GM12878 (cell line): ENCODE measurements at regions of chr14 and their contacts with region 1.

Region 1: GRCh38 chr14:88013750-88014349 is 8.9 kb downstream of the GPR65 start:
- DNase-seq: no peak
- ATAC-seq: peak; percentile 79
- H3K4me3 ChIP-seq: no peak overlapping the region
- H3K27ac ChIP-seq: no peak overlapping the region
- H3K4me1 ChIP-seq: no peaks in the 10 kb centered on the region
- H3K27me3 ChIP-seq: no peaks in the 10 kb centered on the region
- CTCF ChIP-seq: peak; percentile 88 to 96 (median 91); a peak in 5 of 6 replicates
- EP300 ChIP-seq: no peak
- POLR2A ChIP-seq: no peak
- RAD21 ChIP-seq: peak; percentile 79

Region 2: GRCh38 chr14:87397499-87397898 is 616.4 kb before region 1 on chr14:
- CTCF ChIA-PET with region 1: no interaction called
- POLR2A ChIA-PET with region 1: no interaction called
- RAD21 ChIA-PET with region 1: no interaction called
- SMC1A ChIA-PET with region 1: no interaction called
- in situ Hi-C with region 1: no loop called
- intact Hi-C with region 1: no loop called
- DNase-seq: no peak
- ATAC-seq: peak; percentile 95
- H3K4me3 ChIP-seq: no peak overlapping the region
- H3K27ac ChIP-seq: no peak overlapping the region
- H3K4me1 ChIP-seq: no peaks in the 10 kb centered on the region
- H3K27me3 ChIP-seq: no peaks in the 10 kb centered on the region
- CTCF ChIP-seq: no peak; a peak in 1 of 6 replicates
- EP300 ChIP-seq: no peak
- POLR2A ChIP-seq: no peak
- RAD21 ChIP-seq: no peak

Region 3: GRCh38 chr14:87952307-87953094 is 61.3 kb before region 1 on chr14:
- CTCF ChIA-PET with region 1: interaction called, 67 read pairs
- POLR2A ChIA-PET with region 1: no interaction called
- RAD21 ChIA-PET with region 1: interaction called, 11 read pairs
- SMC1A ChIA-PET with region 1: interaction called, 43 read pairs
- in situ Hi-C with region 1: no loop called
- intact Hi-C with region 1: no loop called
- DNase-seq: no peak
- ATAC-seq: peak; percentile 88
- H3K4me3 ChIP-seq: no peak overlapping the region
- H3K27ac ChIP-seq: no peak overlapping the region; the same call in 1 of the 2 replicates
- H3K4me1 ChIP-seq: peaks cover 4% of the 10 kb centered on the region
- H3K27me3 ChIP-seq: no peaks in the 10 kb centered on the region
- CTCF ChIP-seq: no peak
- EP300 ChIP-seq: no peak
- POLR2A ChIP-seq: no peak
- RAD21 ChIP-seq: no peak

Region 4: GRCh38 chr14:87992718-87993628 is 20.9 kb before region 1 on chr14 and contains the start of gene GALC:
- CTCF ChIA-PET with region 1: interaction called, 17 read pairs
- POLR2A ChIA-PET with region 1: interaction called, 122 read pairs
- RAD21 ChIA-PET with region 1: interaction called, 13 read pairs
- SMC1A ChIA-PET with region 1: interaction called, 158 read pairs
- in situ Hi-C with region 1: no loop called
- intact Hi-C with region 1: no loop called
- DNase-seq: peak; percentile 62
- ATAC-seq: peak; percentile 82
- H3K4me3 ChIP-seq: peak within 1 kb of the TSS; percentile 75
- H3K27ac ChIP-seq: peak within 1 kb of the TSS; percentile 84
- H3K4me1 ChIP-seq: peaks cover 26% of the 10 kb centered on the region
- H3K27me3 ChIP-seq: no peaks in the 10 kb centered on the region
- CTCF ChIP-seq: 0 out of 6 replicates have a peak, but pooled peaks of 1 of the 3 experiments have one; percentile 4
- EP300 ChIP-seq: peak; percentile 73 to 81; a peak in 3 of 4 replicates
- POLR2A ChIP-seq: peak; percentile 88
- RAD21 ChIP-seq: peak; percentile 23; the same call in 1 of the 2 replicates
- polyA plus RNA-seq, gene GALC: 1.3 to 1.9 TPM

Region 5: DNA sequence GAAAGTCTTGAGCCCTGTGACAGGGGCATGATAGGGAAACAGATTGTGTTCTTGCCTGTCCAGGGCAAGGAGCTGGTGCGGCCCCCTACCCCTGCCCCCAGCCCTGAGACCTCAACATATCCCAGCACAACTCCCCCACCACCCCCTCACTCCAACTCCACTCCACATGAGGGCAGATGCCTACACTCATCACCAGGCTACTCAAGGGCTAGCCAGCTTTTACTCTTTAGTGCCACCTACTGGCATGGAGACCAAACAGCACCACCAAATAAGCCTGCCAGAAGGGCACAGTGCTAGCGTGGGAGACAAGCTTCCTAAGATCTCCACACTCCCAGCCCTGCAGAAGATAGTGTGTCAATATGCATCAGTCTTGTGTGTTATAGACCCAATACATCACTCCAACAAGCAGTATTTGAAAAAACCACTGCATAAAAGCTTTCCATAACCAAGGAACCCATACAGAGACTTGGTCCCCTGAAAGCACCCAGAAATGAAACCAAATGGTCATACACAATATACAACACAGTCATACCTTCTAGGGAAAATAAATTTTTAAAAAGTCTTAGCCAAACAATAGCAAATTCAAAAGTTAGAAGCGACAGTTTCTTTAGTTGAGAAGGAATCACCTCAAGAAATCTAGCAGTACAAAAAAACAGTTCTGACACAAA is 154.8 kb after region 1 on chr14:
- CTCF ChIA-PET with region 1: interaction called, 68 read pairs
- POLR2A ChIA-PET with region 1: no interaction called
- RAD21 ChIA-PET with region 1: interaction called, 12 read pairs
- SMC1A ChIA-PET with region 1: interaction called, 19 read pairs
- in situ Hi-C with region 1: no loop called
- intact Hi-C with region 1: loop called (anchors 1 kb)
- DNase-seq: no peak
- ATAC-seq: peak; percentile 98
- H3K4me3 ChIP-seq: no peak overlapping the region
- H3K27ac ChIP-seq: no peak overlapping the region
- H3K4me1 ChIP-seq: peaks cover 5% of the 10 kb centered on the region
- H3K27me3 ChIP-seq: no peaks in the 10 kb centered on the region
- CTCF ChIP-seq: peak; percentile 76 to 87 (median 76)
- EP300 ChIP-seq: no peak
- POLR2A ChIP-seq: no peak
- RAD21 ChIP-seq: peak; percentile 74

Region 6: DNA sequence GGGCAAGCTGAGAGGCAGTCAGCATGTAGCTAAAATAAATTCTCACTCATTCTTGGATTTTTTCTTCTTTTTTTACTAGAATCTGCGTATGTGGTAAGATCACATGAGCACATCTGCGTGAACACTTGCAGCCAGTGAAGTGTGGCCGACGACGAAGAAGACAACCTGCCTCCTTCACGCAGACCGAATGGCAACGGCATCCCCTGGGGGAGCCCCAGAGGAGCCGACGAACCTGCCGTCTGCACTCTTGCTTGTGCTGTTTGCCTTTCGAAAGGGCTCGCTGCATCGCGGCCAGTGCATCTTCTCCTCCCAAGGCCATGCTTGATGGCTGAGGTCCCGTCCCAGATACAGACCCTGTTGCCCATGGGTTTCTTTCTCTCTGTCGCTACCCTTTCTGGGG is 195.4 kb after region 1 on chr14:
- CTCF ChIA-PET with region 1: no interaction called
- POLR2A ChIA-PET with region 1: no interaction called
- RAD21 ChIA-PET with region 1: no interaction called
- SMC1A ChIA-PET with region 1: no interaction called
- in situ Hi-C with region 1: no loop called
- intact Hi-C with region 1: no loop called
- DNase-seq: no peak
- ATAC-seq: no peak
- H3K4me3 ChIP-seq: no peak overlapping the region
- H3K27ac ChIP-seq: no peak overlapping the region
- H3K4me1 ChIP-seq: no peaks in the 10 kb centered on the region
- H3K27me3 ChIP-seq: no peaks in the 10 kb centered on the region
- CTCF ChIP-seq: no peak
- EP300 ChIP-seq: no peak
- POLR2A ChIP-seq: no peak
- RAD21 ChIP-seq: no peak

Region 7: GRCh38 chr14:88233915-88234314 is 220.1 kb after region 1 on chr14:
- CTCF ChIA-PET with region 1: interaction called, 28 read pairs
- POLR2A ChIA-PET with region 1: no interaction called
- RAD21 ChIA-PET with region 1: interaction called, 5 read pairs
- SMC1A ChIA-PET with region 1: interaction called, 7 read pairs
- in situ Hi-C with region 1: no loop called
- intact Hi-C with region 1: no loop called
- DNase-seq: no peak
- ATAC-seq: peak; percentile 64
- H3K4me3 ChIP-seq: no peak overlapping the region
- H3K27ac ChIP-seq: no peak overlapping the region
- H3K4me1 ChIP-seq: no peaks in the 10 kb centered on the region
- H3K27me3 ChIP-seq: no peaks in the 10 kb centered on the region
- CTCF ChIP-seq: peak; percentile 40 to 52 (median 48); a peak in 4 of 6 replicates
- EP300 ChIP-seq: no peak
- POLR2A ChIP-seq: no peak
- RAD21 ChIP-seq: peak; percentile 40; the same call in 1 of the 2 replicates

Region 8: DNA sequence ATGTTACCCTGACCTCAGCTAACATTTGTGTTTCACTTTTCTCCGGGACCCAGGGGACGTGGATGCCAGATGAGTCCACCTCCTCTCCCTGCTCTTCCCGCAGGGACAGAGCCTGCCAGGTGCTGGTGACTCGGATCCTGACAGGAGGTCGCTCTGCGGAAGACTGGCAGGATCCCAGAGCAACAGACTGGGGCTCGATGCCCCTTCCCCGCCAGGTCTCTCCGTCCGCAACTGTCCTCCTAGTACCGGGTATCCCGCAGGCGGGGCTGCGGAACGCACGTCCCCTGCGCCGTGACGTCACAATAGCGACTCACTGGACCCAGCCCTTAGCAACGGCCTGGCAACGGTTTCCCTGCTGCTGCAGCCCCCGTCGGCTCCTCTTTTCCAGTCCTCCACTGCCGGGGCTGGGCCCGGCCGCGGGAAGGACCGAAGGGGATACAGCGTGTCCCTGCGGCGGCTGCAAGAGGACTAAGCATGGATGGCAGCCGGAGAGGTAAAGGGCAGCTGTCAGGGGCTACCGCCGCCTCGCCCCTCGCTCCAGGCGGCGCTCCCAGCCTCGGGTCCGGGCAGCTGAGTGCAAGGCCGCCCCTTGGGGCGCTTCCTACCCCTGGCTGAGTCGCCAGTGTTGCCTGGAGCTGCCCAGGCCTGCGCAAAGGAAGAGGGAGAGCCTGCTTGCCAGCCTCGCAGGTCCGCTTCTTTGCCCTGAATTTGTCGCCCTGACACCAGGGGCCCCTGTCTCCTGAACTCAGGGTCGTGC is 371.7 kb after region 1 on chr14 and contains the start of gene SPATA7:
- CTCF ChIA-PET with region 1: interaction called, 7 read pairs
- POLR2A ChIA-PET with region 1: no interaction called
- RAD21 ChIA-PET with region 1: interaction called, 8 read pairs
- SMC1A ChIA-PET with region 1: interaction called, 9 read pairs
- in situ Hi-C with region 1: no loop called
- intact Hi-C with region 1: loop called (anchors 10 kb)
- DNase-seq: peak; percentile 25
- ATAC-seq: peak; percentile 99
- H3K4me3 ChIP-seq: peak within 1 kb of the TSS; percentile 83
- H3K27ac ChIP-seq: no peak within 1 kb of the TSS
- H3K4me1 ChIP-seq: peaks cover 2% of the 10 kb centered on the region; the same call in 1 of the 2 replicates
- H3K27me3 ChIP-seq: peaks cover 0 to 3% of the 10 kb centered on the region in 2 experiments; a peak in 1 of 4 replicates
- CTCF ChIP-seq: no peak
- EP300 ChIP-seq: no peak
- POLR2A ChIP-seq: peak; percentile 83
- RAD21 ChIP-seq: no peak
- polyA plus RNA-seq, gene SPATA7: 0.39 to 0.73 TPM

Region 9: GRCh38 chr14:88437658-88438057 is 423.8 kb after region 1 on chr14:
- CTCF ChIA-PET with region 1: no interaction called
- POLR2A ChIA-PET with region 1: no interaction called
- RAD21 ChIA-PET with region 1: no interaction called
- SMC1A ChIA-PET with region 1: no interaction called
- in situ Hi-C with region 1: no loop called
- intact Hi-C with region 1: no loop called
- DNase-seq: no peak
- ATAC-seq: no peak
- H3K4me3 ChIP-seq: no peak overlapping the region
- H3K27ac ChIP-seq: no peak overlapping the region
- H3K4me1 ChIP-seq: no peaks in the 10 kb centered on the region
- H3K27me3 ChIP-seq: no peaks in the 10 kb centered on the region
- CTCF ChIP-seq: peak in 1 of 3 experiments; percentile 14; a peak in 1 of 6 replicates
- EP300 ChIP-seq: no peak
- POLR2A ChIP-seq: no peak
- RAD21 ChIP-seq: no peak

Region 10: GRCh38 chr14:88746052-88746451 is 732.2 kb after region 1 on chr14:
- CTCF ChIA-PET with region 1: no interaction called
- POLR2A ChIA-PET with region 1: no interaction called
- RAD21 ChIA-PET with region 1: no interaction called
- SMC1A ChIA-PET with region 1: no interaction called
- in situ Hi-C with region 1: no loop called
- intact Hi-C with region 1: no loop called
- DNase-seq: no peak
- ATAC-seq: no peak
- H3K4me3 ChIP-seq: no peak overlapping the region
- H3K27ac ChIP-seq: no peak overlapping the region
- H3K4me1 ChIP-seq: no peaks in the 10 kb centered on the region
- H3K27me3 ChIP-seq: no peaks in the 10 kb centered on the region
- CTCF ChIP-seq: no peak
- EP300 ChIP-seq: no peak
- POLR2A ChIP-seq: no peak
- RAD21 ChIP-seq: no peak